ENCODE measurements at regions of chr16 and their contacts with region 1.

Region 1: DNA sequence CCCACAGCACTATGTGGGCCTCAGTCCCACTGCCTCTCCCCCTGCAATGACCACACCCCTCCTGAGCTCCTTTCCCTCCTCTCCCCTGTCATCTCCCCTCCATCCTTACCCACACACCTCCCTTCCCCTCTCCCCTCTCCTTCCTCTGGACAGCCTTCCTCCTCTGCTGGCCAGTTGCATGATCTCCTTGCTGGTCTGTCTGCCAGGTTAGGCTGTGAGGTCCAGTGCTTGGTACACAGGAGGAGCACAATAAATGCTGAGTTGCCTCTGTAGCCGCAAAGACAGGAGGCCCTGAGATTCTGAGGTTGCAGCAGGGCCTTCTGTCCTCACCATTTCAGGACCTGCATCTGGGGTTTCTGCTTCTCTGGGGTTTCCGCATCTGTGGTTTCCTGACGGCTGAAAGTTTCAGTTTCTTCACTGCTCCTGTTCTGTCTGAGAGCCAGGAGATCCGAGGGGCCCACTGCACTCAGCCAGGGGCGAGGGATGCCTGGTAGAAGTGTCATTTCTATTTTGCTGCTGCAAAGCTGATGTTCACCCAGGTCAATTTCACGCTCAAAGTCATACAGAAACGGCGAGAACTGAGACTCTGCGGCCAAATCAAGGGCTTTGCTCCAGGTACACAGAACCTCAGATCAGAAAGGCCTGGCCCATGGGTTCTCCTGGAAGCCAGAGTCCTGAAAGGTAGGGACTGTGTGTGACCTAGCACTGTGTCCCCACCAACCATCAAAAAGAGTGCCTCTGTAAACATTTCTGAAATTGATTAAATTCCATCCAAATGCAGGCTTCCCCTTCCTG is 4.6 kb upstream of the SLC12A3 start:
- DNase-seq: peak; percentile 17 to 69 (median 53)
- H3K4me3 ChIP-seq: peak overlapping the region; percentile 27
- H3K4me3 Mint-ChIP-seq: peak overlapping the region in 6 of 7 donors; percentile 73 to 87 (median 82)
- H3K27ac ChIP-seq: no peak overlapping the region
- H3K27ac Mint-ChIP-seq: peak overlapping the region; percentile 43 to 97 (median 96)
- H3K4me1 ChIP-seq: peaks cover 50% of the 10 kb centered on the region
- H3K4me1 Mint-ChIP-seq: peaks cover 42 to 61% (median 53%) of the 10 kb centered on the region in 3 donors
- H3K27me3 ChIP-seq: no peaks in the 10 kb centered on the region
- H3K27me3 Mint-ChIP-seq: no peaks in the 10 kb centered on the region

Region 2: GRCh38 chr16:56950881-56951771 is 90.7 kb after region 1 on chr16:
- CTCF ChIA-PET with region 1: interaction called, 27 read pairs
- POLR2A ChIA-PET with region 1: no interaction called
- DNase-seq: peak; percentile 17 to 65 (median 37)
- H3K4me3 ChIP-seq: no peak overlapping the region
- H3K4me3 Mint-ChIP-seq: peak overlapping the region in 1 of 7 donors; percentile 17
- H3K27ac ChIP-seq: no peak overlapping the region
- H3K27ac Mint-ChIP-seq: peak overlapping the region in 5 of 8 donors; percentile 5 to 71 (median 18)
- H3K4me1 ChIP-seq: no peaks in the 10 kb centered on the region
- H3K4me1 Mint-ChIP-seq: peaks cover 12 to 17% (median 12%) of the 10 kb centered on the region in 3 donors
- H3K27me3 ChIP-seq: no peaks in the 10 kb centered on the region
- H3K27me3 Mint-ChIP-seq: peaks cover 0 to 2% of the 10 kb centered on the region in 2 donors

Measured in CD8-positive, alpha-beta memory T cell (primary cell).